ENCODE measurements at regions of chr6 and their contacts with region 1.

Region 1: DNA sequence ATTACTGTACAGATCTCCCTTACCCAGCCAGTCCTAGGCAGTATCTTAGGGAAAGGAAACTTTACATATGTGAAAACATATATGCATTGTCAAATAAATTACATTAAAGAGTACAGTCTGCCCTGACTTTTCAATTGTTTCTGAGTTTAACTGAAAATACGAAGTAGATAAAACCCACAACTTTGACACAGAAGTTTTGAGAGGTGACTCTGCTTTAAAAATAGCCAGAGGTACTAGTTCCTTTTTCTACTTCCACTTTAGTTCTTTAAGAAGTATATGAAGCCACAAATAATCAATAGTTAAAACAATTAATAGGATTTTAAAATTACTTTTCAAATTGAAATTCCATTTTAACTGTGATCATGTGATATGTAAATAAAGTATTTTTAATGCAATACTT is 62.9 kb downstream of the BMP5 start:
- DNase-seq: no peak
- ATAC-seq: no peak
- H3K4me3 ChIP-seq: no peak overlapping the region
- H3K27ac ChIP-seq: no peak overlapping the region
- H3K4me1 ChIP-seq: no peaks in the 10 kb centered on the region
- H3K27me3 ChIP-seq: no peaks in the 10 kb centered on the region
- CTCF ChIP-seq: no peak
- POLR2A ChIP-seq: no peak
- RAD21 ChIP-seq: no peak

Region 2: GRCh38 chr6:55141611-55142010 is 670.9 kb before region 1 on chr6:
- CTCF ChIA-PET with region 1: no interaction called
- POLR2A ChIA-PET with region 1: interaction called, 21 read pairs
- dilution Hi-C with region 1: no loop called
- in situ Hi-C with region 1: no loop called
- intact Hi-C with region 1: no loop called
- DNase-seq: peak; percentile 30
- ATAC-seq: peak; percentile 40; the same call in 1 of the 2 replicates
- H3K4me3 ChIP-seq: no peak overlapping the region
- H3K27ac ChIP-seq: no peak overlapping the region
- H3K4me1 ChIP-seq: no peaks in the 10 kb centered on the region
- H3K27me3 ChIP-seq: no peaks in the 10 kb centered on the region
- CTCF ChIP-seq: no peak
- POLR2A ChIP-seq: no peak
- RAD21 ChIP-seq: no peak

Region 3: GRCh38 chr6:56327946-56328727 is 515.6 kb after region 1 on chr6:
- CTCF ChIA-PET with region 1: no interaction called
- POLR2A ChIA-PET with region 1: no interaction called
- dilution Hi-C with region 1: no loop called
- in situ Hi-C with region 1: no loop called
- intact Hi-C with region 1: no loop called
- DNase-seq: no peak
- ATAC-seq: no peak; the same call in 1 of the 2 replicates
- H3K4me3 ChIP-seq: no peak overlapping the region
- H3K27ac ChIP-seq: no peak overlapping the region
- H3K4me1 ChIP-seq: peaks cover 13% of the 10 kb centered on the region
- H3K27me3 ChIP-seq: no peaks in the 10 kb centered on the region
- CTCF ChIP-seq: no peak
- POLR2A ChIP-seq: no peak
- RAD21 ChIP-seq: no peak

Measured in IMR-90 (cell line).